ENCODE measurements at regions of chrX and their contacts with region 1.

Region 1: DNA sequence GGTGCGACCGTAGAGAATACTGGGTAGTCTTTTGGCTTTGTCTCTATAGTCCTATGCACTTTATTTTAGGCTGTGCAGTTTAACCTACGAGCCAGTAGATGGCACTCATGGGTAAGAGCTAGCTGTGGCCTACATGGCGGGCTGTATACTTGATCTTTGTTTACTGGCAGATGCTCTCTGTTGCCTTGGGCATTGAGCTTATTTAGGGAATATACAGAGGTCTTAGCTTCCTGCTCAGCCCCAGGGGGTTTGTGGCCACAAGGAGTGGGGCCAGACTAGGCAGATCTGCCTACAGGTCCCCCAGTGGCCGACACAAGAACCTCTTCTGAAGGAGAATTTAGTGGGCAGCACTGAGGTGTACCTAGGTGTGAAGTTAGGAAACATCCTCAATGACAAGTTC is 227.6 kb upstream of the HDX start:
- DNase-seq: peak; percentile 4
- H3K4me3 Mint-ChIP-seq: no peak overlapping the region
- H3K27ac Mint-ChIP-seq: no peak overlapping the region
- H3K4me1 Mint-ChIP-seq: no peaks in the 10 kb centered on the region
- H3K27me3 Mint-ChIP-seq: no peaks in the 10 kb centered on the region
- CTCF ChIP-seq: peak; percentile 54

Region 2: DNA sequence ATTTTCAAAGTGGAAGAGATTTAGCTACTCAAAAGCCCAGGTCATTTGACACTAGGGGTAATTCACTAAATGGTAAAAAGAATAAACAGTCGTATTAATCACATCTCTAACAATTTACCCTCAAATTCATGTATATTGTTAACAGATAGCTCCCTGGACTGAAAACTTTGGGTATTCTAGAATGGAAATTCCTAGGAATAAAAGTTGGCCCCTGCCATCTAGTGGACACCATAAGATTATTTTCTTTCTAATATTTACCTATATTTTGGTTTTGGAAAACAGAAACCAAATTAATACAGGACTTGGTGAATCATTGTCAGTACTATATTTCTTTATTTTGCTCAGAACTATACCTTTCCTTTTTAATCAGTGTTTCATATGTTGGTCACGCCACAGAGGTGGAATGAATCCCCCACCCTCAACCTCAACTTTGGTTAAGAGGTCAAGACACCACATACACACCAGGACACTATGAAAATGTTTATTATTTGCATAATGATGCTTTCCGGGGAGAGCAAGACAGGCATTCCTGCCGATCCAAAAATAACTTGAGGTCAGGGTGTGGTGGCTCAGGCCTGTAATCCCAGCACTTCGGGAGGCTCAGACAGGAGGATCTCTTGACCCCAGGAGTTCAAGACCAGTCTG is 177.6 kb after region 1 on chrX:
- CTCF ChIA-PET with region 1: interaction called, 7 read pairs
- intact Hi-C with region 1: loop called (anchors 1 kb)
- DNase-seq: no peak
- H3K4me3 Mint-ChIP-seq: no peak overlapping the region
- H3K27ac Mint-ChIP-seq: no peak overlapping the region
- H3K4me1 Mint-ChIP-seq: no peaks in the 10 kb centered on the region
- H3K27me3 Mint-ChIP-seq: no peaks in the 10 kb centered on the region
- CTCF ChIP-seq: no peak